CD8-positive, alpha-beta T cell (primary cell): ENCODE measurements at regions of chr1 and their contacts with region 1.

Region 1: GRCh38 chr1:84781946-84782771 is 91.9 kb upstream of the SSX2IP start:
- DNase-seq: peak; percentile 58 to 88 (median 79)
- ATAC-seq: peak; percentile 92
- H3K4me3 ChIP-seq: peak overlapping the region; percentile 23 to 36
- H3K4me3 Mint-ChIP-seq: peak overlapping the region; percentile 75
- H3K27ac ChIP-seq: no peak overlapping the region
- H3K27ac Mint-ChIP-seq: no peak overlapping the region
- H3K4me1 ChIP-seq: peaks cover 29% of the 10 kb centered on the region
- H3K4me1 Mint-ChIP-seq: peaks cover 33% of the 10 kb centered on the region
- H3K27me3 ChIP-seq: no peaks in the 10 kb centered on the region
- H3K27me3 Mint-ChIP-seq: no peaks in the 10 kb centered on the region
- CTCF ChIP-seq: peak; percentile 61

Region 2: GRCh38 chr1:84506002-84506728 is 276.0 kb before region 1 on chr1 and contains the starts of genes GNG5 and SPATA1:
- CTCF ChIA-PET with region 1: no interaction called
- POLR2A ChIA-PET with region 1: no interaction called
- intact Hi-C with region 1: no loop called
- DNase-seq: peak; percentile 91 to 98 (median 98)
- ATAC-seq: peak; percentile 89
- H3K4me3 ChIP-seq: peak within 1 kb of the TSS; percentile 87 to 95
- H3K4me3 Mint-ChIP-seq: peak within 1 kb of the TSS; percentile 94
- H3K27ac ChIP-seq: peak within 1 kb of the TSS; percentile 75 to 88
- H3K27ac Mint-ChIP-seq: peak within 1 kb of the TSS; percentile 96
- H3K4me1 ChIP-seq: peaks cover 40% of the 10 kb centered on the region
- H3K4me1 Mint-ChIP-seq: peaks cover 45% of the 10 kb centered on the region
- H3K27me3 ChIP-seq: no peaks in the 10 kb centered on the region
- H3K27me3 Mint-ChIP-seq: no peaks in the 10 kb centered on the region
- CTCF ChIP-seq: no peak
- total RNA-seq, gene GNG5: 19.5 TPM
- total RNA-seq, gene SPATA1: 0.52 to 0.94 TPM

Region 3: DNA sequence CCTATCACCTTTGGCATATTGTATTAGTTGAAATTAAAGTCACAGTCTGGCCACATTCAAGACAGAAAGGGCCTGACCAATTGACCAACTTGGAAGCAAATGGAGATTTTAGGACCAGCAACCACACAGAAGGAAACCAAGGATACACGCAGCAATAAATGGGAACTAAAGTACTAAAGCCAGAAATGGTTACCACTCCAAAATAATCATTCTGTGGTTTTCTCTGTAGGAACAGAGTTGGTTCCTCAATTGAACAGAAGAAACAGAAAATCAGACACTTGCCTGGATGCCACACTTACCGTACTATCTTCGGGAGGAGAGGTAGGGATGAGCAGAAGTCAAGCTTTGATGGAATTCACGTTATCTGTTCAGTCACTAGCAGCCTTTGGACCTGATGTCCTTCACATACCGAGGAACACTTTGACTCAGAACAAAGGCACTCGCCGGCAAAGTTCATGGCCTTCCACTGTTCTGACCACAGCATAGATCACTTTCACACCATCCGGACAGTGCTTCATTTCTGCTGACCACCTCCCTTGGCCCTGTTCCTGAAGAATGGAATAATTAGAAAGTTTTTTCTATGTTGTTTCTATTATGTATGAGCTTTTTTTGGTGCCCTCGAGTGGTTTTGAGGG is 13.9 kb after region 1 on chr1:
- CTCF ChIA-PET with region 1: interaction called, 12 read pairs
- POLR2A ChIA-PET with region 1: no interaction called
- intact Hi-C with region 1: no loop called
- DNase-seq: no peak
- ATAC-seq: no peak
- H3K4me3 ChIP-seq: no peak overlapping the region
- H3K4me3 Mint-ChIP-seq: no peak overlapping the region
- H3K27ac ChIP-seq: no peak overlapping the region
- H3K27ac Mint-ChIP-seq: no peak overlapping the region
- H3K4me1 ChIP-seq: no peaks in the 10 kb centered on the region
- H3K4me1 Mint-ChIP-seq: peaks cover 4% of the 10 kb centered on the region
- H3K27me3 ChIP-seq: no peaks in the 10 kb centered on the region
- H3K27me3 Mint-ChIP-seq: no peaks in the 10 kb centered on the region
- CTCF ChIP-seq: no peak